ENCODE measurements at regions of chr2 and their contacts with region 1.

Region 1: DNA sequence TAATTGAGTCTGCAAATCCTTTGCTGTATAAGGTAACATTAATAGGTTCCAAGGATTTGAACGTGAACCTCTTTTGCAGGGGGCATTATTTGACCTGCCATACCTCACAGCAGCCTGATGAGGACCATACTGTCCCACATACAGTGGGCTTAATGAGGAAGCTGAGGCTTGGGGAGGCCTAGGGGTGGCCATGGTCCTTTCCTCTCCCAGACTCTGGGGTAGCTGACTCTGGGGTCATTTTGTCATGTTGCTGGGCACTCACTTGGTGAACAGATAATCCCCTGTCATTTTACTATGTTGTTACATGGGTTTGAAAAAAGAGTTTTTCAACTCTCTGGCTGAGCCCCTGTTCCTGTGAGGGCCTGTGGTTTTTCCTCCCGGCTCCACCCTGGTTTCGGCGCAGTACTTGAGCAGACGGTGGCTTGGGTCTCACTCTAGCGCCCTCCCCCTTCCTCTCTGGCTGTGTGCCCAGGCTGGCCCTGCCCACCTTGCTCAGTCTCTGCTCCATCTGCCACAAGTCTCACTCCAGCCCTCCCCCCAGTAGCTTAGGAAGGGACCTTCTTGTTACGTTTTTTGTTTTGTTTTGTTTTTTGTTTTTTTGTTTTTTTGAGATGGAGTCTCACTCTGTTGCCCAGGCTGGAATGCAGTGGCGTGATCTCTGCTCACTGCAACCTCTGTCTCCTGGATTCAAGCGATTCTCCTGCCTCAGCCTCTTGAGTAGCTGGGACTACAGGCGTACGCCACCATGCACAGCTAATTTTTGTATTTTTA is 21.0 kb downstream of the INPP4A start:
- DNase-seq: peak; percentile 90
- H3K4me3 Mint-ChIP-seq: peak overlapping the region; percentile 73
- H3K27ac Mint-ChIP-seq: peak overlapping the region; percentile 97
- H3K4me1 Mint-ChIP-seq: peaks cover 92% of the 10 kb centered on the region
- H3K27me3 Mint-ChIP-seq: no peaks in the 10 kb centered on the region

Region 2: GRCh38 chr2:97998431-97999005 is 467.1 kb before region 1 on chr2:
- CTCF ChIA-PET with region 1: no interaction called
- DNase-seq: no peak
- H3K4me3 Mint-ChIP-seq: no peak overlapping the region
- H3K27ac Mint-ChIP-seq: no peak overlapping the region
- H3K4me1 Mint-ChIP-seq: peaks cover 23% of the 10 kb centered on the region
- H3K27me3 Mint-ChIP-seq: peaks cover 5% of the 10 kb centered on the region

Region 3: GRCh38 chr2:98114643-98115330 is 350.9 kb before region 1 on chr2:
- CTCF ChIA-PET with region 1: no interaction called
- DNase-seq: no peak
- H3K4me3 Mint-ChIP-seq: no peak overlapping the region
- H3K27ac Mint-ChIP-seq: no peak overlapping the region
- H3K4me1 Mint-ChIP-seq: no peaks in the 10 kb centered on the region
- H3K27me3 Mint-ChIP-seq: peaks cover 28% of the 10 kb centered on the region

Region 4: GRCh38 chr2:98412751-98413458 is 52.7 kb before region 1 on chr2:
- CTCF ChIA-PET with region 1: interaction called, 22 read pairs
- DNase-seq: peak; percentile 64
- H3K4me3 Mint-ChIP-seq: no peak overlapping the region
- H3K27ac Mint-ChIP-seq: no peak overlapping the region
- H3K4me1 Mint-ChIP-seq: peaks cover 11% of the 10 kb centered on the region
- H3K27me3 Mint-ChIP-seq: peaks cover 15% of the 10 kb centered on the region

Region 5: DNA sequence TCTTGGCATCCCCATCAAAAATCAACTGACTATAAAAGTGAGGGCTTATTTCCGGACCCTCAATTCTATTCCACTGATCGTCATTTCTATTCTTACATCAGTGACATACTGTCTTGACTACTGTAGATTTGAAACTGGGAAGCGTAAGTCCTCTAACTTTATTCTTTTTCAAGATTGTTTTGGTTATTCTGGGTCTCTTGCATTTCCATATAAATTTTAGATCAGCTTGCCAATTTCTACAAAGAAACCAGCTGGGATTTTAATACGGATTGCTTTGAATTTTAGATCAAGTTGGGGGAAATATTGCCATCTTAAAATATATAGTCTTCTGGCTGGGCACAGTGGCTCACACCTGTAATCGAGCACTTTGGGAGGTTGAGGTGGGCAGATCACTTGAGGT is 38.9 kb before region 1 on chr2:
- CTCF ChIA-PET with region 1: no interaction called
- DNase-seq: no peak
- H3K4me3 Mint-ChIP-seq: no peak overlapping the region
- H3K27ac Mint-ChIP-seq: no peak overlapping the region
- H3K4me1 Mint-ChIP-seq: no peaks in the 10 kb centered on the region
- H3K27me3 Mint-ChIP-seq: peaks cover 33% of the 10 kb centered on the region

Region 6: GRCh38 chr2:98445177-98445647 is 20.4 kb before region 1 on chr2:
- CTCF ChIA-PET with region 1: interaction called, 34 read pairs
- DNase-seq: peak; percentile 57
- H3K4me3 Mint-ChIP-seq: peak overlapping the region; percentile 91
- H3K27ac Mint-ChIP-seq: peak overlapping the region; percentile 89
- H3K4me1 Mint-ChIP-seq: peaks cover 48% of the 10 kb centered on the region
- H3K27me3 Mint-ChIP-seq: peaks cover 4% of the 10 kb centered on the region

Region 7: DNA sequence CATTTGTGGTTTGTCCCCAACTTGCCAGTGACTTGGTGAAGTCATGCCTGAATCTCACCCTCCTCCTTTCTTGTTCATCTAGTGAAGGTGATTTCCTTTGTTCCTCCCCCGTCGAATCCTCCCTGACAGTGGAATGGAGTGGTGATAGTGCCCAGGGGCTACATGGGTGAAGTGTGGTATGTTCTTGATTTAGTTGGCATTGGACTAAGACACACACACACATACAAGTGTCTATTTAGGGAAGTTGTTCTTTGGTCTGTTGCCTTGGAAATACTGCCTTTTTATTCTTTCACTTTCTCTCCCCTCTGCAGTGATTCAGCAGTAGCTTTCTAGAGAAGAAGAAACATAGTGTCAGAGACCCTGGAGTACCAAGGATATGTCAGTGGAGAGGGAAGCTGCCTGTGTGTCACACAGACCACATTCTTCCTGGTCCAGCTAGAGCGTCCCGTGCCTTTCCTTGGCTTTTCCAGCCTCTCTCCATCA is 10.1 kb before region 1 on chr2:
- CTCF ChIA-PET with region 1: interaction called, 25 read pairs
- DNase-seq: peak; percentile 59
- H3K4me3 Mint-ChIP-seq: peak overlapping the region; percentile 51
- H3K27ac Mint-ChIP-seq: peak overlapping the region; percentile 86
- H3K4me1 Mint-ChIP-seq: peaks cover 96% of the 10 kb centered on the region
- H3K27me3 Mint-ChIP-seq: no peaks in the 10 kb centered on the region

Region 8: DNA sequence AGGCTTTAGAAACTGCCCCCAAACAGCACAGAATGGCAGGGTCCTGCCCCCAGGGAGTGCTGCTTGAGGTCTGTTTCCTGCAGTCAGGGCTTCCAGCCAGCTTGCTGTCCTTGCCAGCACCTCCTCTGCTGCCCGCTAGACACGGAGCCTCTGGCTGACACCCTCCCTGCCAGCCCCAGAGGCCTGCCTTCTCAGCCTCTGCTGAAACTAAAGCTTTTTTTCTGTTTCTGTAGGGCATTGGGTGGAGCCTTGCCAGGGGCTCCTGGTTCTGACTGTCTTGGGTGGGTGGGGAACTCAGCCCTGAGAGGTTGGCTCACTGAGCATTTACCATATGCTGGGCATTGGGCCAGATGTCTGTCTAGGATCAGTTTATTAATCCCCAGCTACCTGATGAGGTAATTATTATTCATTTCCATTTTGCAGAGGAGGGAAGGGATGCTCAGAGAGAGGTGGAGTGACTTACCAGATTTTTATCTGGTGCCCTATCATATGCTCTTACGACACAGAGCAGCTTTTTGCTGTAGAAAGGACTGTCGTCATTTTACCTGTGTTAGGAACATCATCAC is 14.4 kb after region 1 on chr2:
- CTCF ChIA-PET with region 1: interaction called, 20 read pairs
- DNase-seq: peak; percentile 68
- H3K4me3 Mint-ChIP-seq: peak overlapping the region; percentile 57
- H3K27ac Mint-ChIP-seq: peak overlapping the region; percentile 97
- H3K4me1 Mint-ChIP-seq: peaks cover 99% of the 10 kb centered on the region
- H3K27me3 Mint-ChIP-seq: no peaks in the 10 kb centered on the region

Region 9: GRCh38 chr2:98487806-98488651 is 22.4 kb after region 1 on chr2:
- CTCF ChIA-PET with region 1: interaction called, 16 read pairs
- DNase-seq: peak; percentile 67
- H3K4me3 Mint-ChIP-seq: no peak overlapping the region
- H3K27ac Mint-ChIP-seq: peak overlapping the region; percentile 70
- H3K4me1 Mint-ChIP-seq: peaks cover 89% of the 10 kb centered on the region
- H3K27me3 Mint-ChIP-seq: no peaks in the 10 kb centered on the region

Measured in activated naive CD4-positive, alpha-beta T cell treated with anti-CD3 and anti-CD28 coated beads, Interleukin-2, amount 10 ng/mL, durations not matched to agents 7 days and 5 days (primary cell).